ENCODE measurements at regions of chr11 and their contacts with region 1.

Region 1: DNA sequence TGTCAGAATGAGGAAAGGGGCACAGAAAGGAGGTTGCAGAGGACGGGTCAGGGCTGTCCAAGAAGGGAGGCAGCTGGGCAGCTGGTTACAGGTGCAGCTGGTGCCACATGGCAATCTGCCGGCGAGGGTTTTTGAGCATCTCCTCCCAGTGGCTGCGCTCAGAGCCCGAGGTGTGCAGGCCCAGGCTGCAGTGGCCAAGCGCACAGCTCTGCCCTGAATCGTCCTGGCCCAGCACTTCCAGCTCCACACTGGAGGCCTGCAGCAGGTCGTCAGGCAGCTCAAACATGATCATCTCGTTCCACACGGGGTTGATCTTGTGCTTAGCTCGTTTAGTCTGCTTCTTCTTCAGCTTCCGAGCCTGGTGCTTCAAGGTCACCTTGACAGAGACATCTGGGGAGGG is 42.2 kb downstream of the SYT13 start:
- DNase-seq: no peak
- H3K4me3 Mint-ChIP-seq: no peak overlapping the region
- H3K27ac Mint-ChIP-seq: no peak overlapping the region
- H3K4me1 Mint-ChIP-seq: no peaks in the 10 kb centered on the region
- H3K27me3 Mint-ChIP-seq: no peaks in the 10 kb centered on the region

Region 2: GRCh38 chr11:45233121-45233803 is 10.7 kb before region 1 on chr11:
- CTCF ChIA-PET with region 1: interaction called, 11 read pairs
- POLR2A ChIA-PET with region 1: no interaction called
- intact Hi-C with region 1: no loop called
- DNase-seq: peak; percentile 76
- H3K4me3 Mint-ChIP-seq: no peak overlapping the region
- H3K27ac Mint-ChIP-seq: no peak overlapping the region
- H3K4me1 Mint-ChIP-seq: no peaks in the 10 kb centered on the region
- H3K27me3 Mint-ChIP-seq: peaks cover 10% of the 10 kb centered on the region